H1 (cell line): ENCODE measurements at regions of chr1 and their contacts with region 1.

Region 1: GRCh38 chr1:9724706-9725476 is 73.4 kb downstream of the PIK3CD start:
- DNase-seq: peak; percentile 64 to 88
- H3K4me3 ChIP-seq: no peak overlapping the region
- H3K27ac ChIP-seq: no peak overlapping the region; the same call in 1 of the 2 replicates
- H3K4me1 ChIP-seq: peaks cover 0 to 12% (median 7%) of the 10 kb centered on the region in 4 experiments; a peak in 5 of 7 replicates
- H3K27me3 ChIP-seq: no peaks in the 10 kb centered on the region
- CTCF ChIP-seq: peak in 2 of 3 experiments; percentile 95 to 99; a peak in 3 of 4 replicates
- EP300 ChIP-seq: no peak
- POLR2A ChIP-seq: no peak
- RAD21 ChIP-seq: peak; percentile 69 to 78

Region 2: GRCh38 chr1:9476790-9477463 is 248.0 kb before region 1 on chr1:
- CTCF ChIA-PET with region 1: no interaction called
- POLR2A ChIA-PET with region 1: no interaction called
- DNase-seq: no peak
- H3K4me3 ChIP-seq: no peak overlapping the region
- H3K27ac ChIP-seq: no peak overlapping the region
- H3K4me1 ChIP-seq: no peaks in the 10 kb centered on the region
- H3K27me3 ChIP-seq: no peaks in the 10 kb centered on the region
- CTCF ChIP-seq: no peak
- EP300 ChIP-seq: no peak
- POLR2A ChIP-seq: no peak
- RAD21 ChIP-seq: no peak

Region 3: GRCh38 chr1:9588551-9589143 is 136.2 kb before region 1 on chr1 and contains the start of gene TMEM201:
- CTCF ChIA-PET with region 1: no interaction called
- POLR2A ChIA-PET with region 1: no interaction called
- DNase-seq: peak; percentile 68 to 97
- H3K4me3 ChIP-seq: peak within 1 kb of the TSS; percentile 60 to 82 (median 70)
- H3K27ac ChIP-seq: no peak within 1 kb of the TSS; the same call in 1 of the 2 replicates
- H3K4me1 ChIP-seq: peaks cover 0 to 35% (median 25%) of the 10 kb centered on the region in 4 experiments; a peak in 5 of 7 replicates
- H3K27me3 ChIP-seq: no peaks in the 10 kb centered on the region
- CTCF ChIP-seq: peak in 2 of 3 experiments; percentile 61 to 74; a peak in 3 of 4 replicates
- EP300 ChIP-seq: no peak; a peak in 1 of 3 replicates
- POLR2A ChIP-seq: no peak; a peak in 1 of 3 replicates
- RAD21 ChIP-seq: peak in 1 of 2 experiments; percentile 31; a peak in 2 of 4 replicates
- total RNA-seq, gene TMEM201: 27.1 and 27.9 TPM in 2 replicates

Region 4: GRCh38 chr1:9615316-9616063 is 109.4 kb before region 1 on chr1:
- CTCF ChIA-PET with region 1: interaction called, 21 read pairs
- POLR2A ChIA-PET with region 1: no interaction called
- DNase-seq: peak; percentile 59 to 86
- H3K4me3 ChIP-seq: no peak overlapping the region
- H3K27ac ChIP-seq: no peak overlapping the region
- H3K4me1 ChIP-seq: no peaks in the 10 kb centered on the region; a peak in 1 of 7 replicates
- H3K27me3 ChIP-seq: no peaks in the 10 kb centered on the region
- CTCF ChIP-seq: peak; percentile 94 to 96 (median 95)
- EP300 ChIP-seq: no peak
- POLR2A ChIP-seq: no peak
- RAD21 ChIP-seq: peak; percentile 68 to 72

Region 5: DNA sequence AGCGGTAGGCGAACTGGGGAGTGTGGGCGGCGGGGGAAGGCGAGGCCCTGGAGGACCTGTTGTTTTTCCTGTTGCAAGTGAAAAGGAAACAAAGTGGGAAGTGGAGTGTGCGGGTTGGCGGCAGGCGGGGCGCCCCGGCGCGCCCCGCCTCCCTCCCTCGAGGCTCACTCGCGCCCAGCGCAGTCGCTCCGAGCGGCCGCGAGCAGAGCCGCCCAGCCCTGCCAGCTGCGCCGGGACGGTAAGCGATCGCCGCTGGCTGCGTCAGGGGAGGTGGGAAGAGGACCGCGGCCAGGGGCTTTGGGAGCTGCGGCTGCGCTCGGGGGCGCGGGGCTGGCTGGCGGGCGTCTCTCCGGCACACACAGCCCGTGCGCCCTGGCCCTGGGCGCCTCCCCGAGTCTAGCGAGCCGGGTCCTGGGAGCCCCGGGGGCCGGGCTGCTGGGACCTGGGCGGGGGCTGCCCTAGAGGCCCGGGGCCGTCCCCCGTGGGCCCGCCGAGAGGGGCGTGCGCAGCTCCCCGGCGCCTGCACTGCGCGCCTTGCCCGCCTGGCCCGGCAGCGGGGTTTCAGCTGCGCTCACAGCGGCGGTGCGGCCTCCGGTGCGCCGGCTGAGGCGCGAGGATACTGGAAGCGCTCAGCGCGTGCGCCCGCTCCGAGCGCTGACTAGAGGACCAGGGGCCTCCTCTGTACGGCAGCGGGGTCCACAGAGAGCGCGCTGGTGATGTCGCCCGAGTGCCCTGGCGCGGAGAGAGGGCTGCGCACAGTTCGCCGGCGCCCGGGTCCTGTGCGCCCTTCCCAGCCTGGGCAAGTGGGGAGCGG is 73.1 kb before region 1 on chr1 and contains the start of gene PIK3CD:
- CTCF ChIA-PET with region 1: interaction called, 10 read pairs
- POLR2A ChIA-PET with region 1: no interaction called
- DNase-seq: peak in 1 of 2 experiments; percentile 76
- H3K4me3 ChIP-seq: peak within 1 kb of the TSS; percentile 52 to 71 (median 58)
- H3K27ac ChIP-seq: no peak within 1 kb of the TSS
- H3K4me1 ChIP-seq: peaks cover 0 to 3% (median 0%) of the 10 kb centered on the region in 4 experiments; a peak in 3 of 7 replicates
- H3K27me3 ChIP-seq: peaks cover 5 to 33% (median 29%) of the 10 kb centered on the region in 4 experiments
- CTCF ChIP-seq: no peak
- EP300 ChIP-seq: no peak
- POLR2A ChIP-seq: no peak
- RAD21 ChIP-seq: no peak
- total RNA-seq, gene PIK3CD: 24.1 and 24.8 TPM in 2 replicates

Region 6: DNA sequence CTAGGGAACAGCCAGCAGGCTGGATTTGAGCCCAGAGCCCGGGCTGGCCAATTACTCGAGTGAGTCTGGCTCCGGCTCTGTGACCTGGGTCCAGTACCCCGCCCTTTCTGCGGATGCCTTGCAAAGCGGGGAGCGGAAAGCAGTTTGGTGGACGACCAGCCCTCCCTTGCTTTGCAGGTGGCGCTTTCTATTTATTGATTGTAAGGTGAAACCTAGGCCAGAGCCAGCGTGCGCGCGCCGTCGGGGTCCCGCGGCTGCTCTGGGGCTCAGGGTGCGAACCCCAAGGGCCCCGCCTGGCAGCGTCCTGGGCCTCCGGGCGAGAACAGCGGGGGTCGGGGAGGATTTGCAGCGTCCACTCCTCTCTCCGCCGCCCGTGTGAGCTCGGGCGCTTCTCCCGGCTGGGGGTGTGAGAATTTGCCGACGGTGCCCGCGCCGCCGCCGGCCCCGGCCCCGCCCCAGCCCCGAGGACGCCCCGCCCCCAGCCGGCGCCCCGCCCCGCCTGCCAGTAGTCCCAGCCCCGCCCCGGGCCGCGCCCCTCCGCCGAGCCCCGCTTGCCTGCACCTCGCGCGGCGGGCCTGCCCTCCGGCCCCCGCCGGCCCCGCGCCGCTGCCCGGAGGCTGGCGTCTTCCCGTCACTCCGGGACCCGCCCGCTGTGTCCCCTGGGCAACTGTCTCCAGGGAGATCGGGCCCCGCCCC is 35.7 kb before region 1 on chr1:
- CTCF ChIA-PET with region 1: interaction called, 49 read pairs
- POLR2A ChIA-PET with region 1: interaction called, 3 read pairs
- DNase-seq: peak in 1 of 2 experiments; percentile 96
- H3K4me3 ChIP-seq: peak overlapping the region; percentile 46 to 81 (median 59)
- H3K27ac ChIP-seq: peak overlapping the region; percentile 53; the same call in 1 of the 2 replicates
- H3K4me1 ChIP-seq: peaks cover 7 to 24% (median 15%) of the 10 kb centered on the region in 4 experiments
- H3K27me3 ChIP-seq: peaks cover 0 to 13% (median 11%) of the 10 kb centered on the region in 4 experiments; a peak in 6 of 7 replicates
- CTCF ChIP-seq: no peak
- EP300 ChIP-seq: no peak
- POLR2A ChIP-seq: no peak; a peak in 1 of 3 replicates
- RAD21 ChIP-seq: no peak

Region 7: GRCh38 chr1:9711466-9712020 is 13.3 kb before region 1 on chr1:
- CTCF ChIA-PET with region 1: interaction called, 62 read pairs
- POLR2A ChIA-PET with region 1: interaction called, 4 read pairs
- DNase-seq: no peak
- H3K4me3 ChIP-seq: no peak overlapping the region
- H3K27ac ChIP-seq: no peak overlapping the region
- H3K4me1 ChIP-seq: peaks cover 4 to 26% (median 19%) of the 10 kb centered on the region in 4 experiments
- H3K27me3 ChIP-seq: no peaks in the 10 kb centered on the region
- CTCF ChIP-seq: no peak
- EP300 ChIP-seq: no peak
- POLR2A ChIP-seq: no peak
- RAD21 ChIP-seq: no peak

Region 8: GRCh38 chr1:9835758-9836450 is 111.0 kb after region 1 on chr1:
- CTCF ChIA-PET with region 1: interaction called, 11 read pairs
- POLR2A ChIA-PET with region 1: no interaction called
- DNase-seq: no peak
- H3K4me3 ChIP-seq: peak overlapping the region in 1 of 4 experiments; percentile 6; a peak in 2 of 8 replicates
- H3K27ac ChIP-seq: no peak overlapping the region
- H3K4me1 ChIP-seq: peaks cover 4 to 12% (median 11%) of the 10 kb centered on the region in 4 experiments; a peak in 6 of 7 replicates
- H3K27me3 ChIP-seq: peaks cover 0 to 4% (median 0%) of the 10 kb centered on the region in 4 experiments; a peak in 3 of 7 replicates
- CTCF ChIP-seq: 0 out of 4 replicates have a peak, but pooled peaks of 1 of the 3 experiments have one; percentile 6
- EP300 ChIP-seq: peak in 1 of 2 experiments; percentile 97; a peak in 1 of 3 replicates
- POLR2A ChIP-seq: no peak
- RAD21 ChIP-seq: peak; percentile 33 to 50; a peak in 3 of 4 replicates

Region 9: DNA sequence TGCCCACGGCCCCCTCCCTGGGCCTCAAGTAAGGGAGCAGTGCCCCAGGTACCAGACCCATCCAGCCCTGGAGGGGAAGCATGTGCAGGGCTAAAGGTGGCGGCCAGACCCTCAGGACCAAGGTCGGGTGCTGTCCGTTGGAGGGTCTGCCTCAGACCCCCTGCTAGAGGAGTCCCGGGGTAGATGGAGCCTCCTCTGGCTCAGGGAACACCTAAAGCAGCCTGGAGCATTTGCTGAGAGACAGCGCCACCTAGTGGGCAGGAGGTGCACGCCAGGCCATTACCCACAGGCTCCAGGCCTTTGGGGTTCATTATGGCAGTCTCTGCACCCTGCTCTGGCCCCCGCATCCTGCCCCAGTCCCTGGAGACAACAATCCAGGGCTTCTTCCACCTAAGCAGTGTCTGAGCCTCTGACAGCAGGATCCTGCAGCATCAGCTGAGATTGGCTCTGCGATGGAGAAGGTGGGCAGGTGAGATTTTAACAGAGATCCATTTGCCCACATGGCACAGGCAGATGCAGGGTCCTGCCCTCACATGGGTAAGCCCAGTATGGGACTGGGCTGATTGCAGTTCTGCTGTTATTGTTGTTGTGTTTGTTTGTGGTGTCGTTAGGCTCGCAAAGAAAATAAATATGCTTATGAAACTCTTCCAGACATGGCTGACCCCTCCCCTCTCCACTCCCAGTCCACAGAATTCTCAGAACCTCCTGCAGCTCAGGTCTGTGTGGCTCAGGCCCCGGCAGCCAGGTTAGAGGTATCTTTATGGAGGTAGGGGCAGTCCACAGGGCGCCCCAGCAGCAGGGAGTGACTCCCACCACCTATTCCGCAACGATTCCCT is 142.7 kb after region 1 on chr1:
- CTCF ChIA-PET with region 1: interaction called, 91 read pairs
- POLR2A ChIA-PET with region 1: no interaction called
- DNase-seq: peak; percentile 56 to 99
- H3K4me3 ChIP-seq: no peak overlapping the region
- H3K27ac ChIP-seq: no peak overlapping the region
- H3K4me1 ChIP-seq: no peaks in the 10 kb centered on the region; a peak in 2 of 7 replicates
- H3K27me3 ChIP-seq: no peaks in the 10 kb centered on the region
- CTCF ChIP-seq: peak; percentile 97 to 100 (median 99)
- EP300 ChIP-seq: no peak
- POLR2A ChIP-seq: no peak
- RAD21 ChIP-seq: peak; percentile 99